Activated T-helper 1 cell treated with anti-CD3 and anti-CD28 coated beads, Interleukin-12 subunit alpha, Interleukin-12 subunit beta, Interleukin-2, Interleukin-4 antibody, amounts not matched to agents 30 ng/mL and 10 ng/mL and 1 ng/mL, durations not matched to agents 14 hours and 24 hours and 36 hours (primary cell): ENCODE measurements at regions of chr12 and their contacts with region 1.

Region 1: DNA sequence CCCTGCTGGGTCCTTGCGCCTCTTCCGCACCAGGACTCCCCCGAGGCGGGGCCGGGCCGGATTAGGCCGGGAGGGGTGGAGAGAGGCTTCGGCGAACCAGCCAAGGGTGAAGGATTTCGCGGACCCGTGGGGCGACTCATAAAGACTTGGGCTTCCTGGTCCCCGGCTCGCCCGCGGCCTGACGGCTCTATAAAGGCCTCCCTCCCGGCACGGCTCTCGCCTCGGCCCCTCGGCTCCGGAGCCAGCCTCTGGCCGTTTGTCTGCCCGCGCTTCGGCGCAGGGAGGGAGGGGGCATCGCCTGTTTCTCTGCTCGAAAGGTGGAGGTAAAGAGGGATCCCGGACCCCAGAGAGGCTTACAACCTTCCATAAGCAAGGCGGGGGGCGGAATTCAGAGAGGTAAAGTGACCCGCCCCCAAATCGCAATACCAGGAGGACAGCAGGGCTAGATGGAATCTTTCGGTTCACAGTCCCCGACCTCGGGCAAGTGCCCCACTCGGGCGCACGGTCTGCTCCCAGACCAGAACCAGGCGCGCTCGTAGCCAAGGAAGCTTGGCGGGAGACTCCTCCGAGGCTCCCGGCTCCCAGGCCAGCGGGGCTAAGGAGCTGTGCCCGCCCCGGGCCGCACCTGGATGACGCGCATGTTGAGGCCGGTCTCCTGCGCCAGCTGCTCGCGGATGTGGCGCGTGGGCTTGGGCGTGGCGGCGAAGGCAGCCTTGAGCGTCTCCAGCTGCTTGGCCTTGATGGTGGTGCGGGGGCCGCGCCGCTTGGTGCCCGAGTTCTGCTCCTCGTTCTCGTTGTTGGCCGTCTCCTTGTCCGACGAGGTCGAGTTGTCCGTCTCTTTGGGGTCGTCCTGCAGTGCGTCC is 3.9 kb downstream of the LHX5 start:
- DNase-seq: no peak
- H3K4me3 Mint-ChIP-seq: no peak overlapping the region
- H3K27ac Mint-ChIP-seq: no peak overlapping the region
- H3K4me1 Mint-ChIP-seq: peaks cover 6% of the 10 kb centered on the region
- H3K27me3 Mint-ChIP-seq: peaks cover 58% of the 10 kb centered on the region

Region 2: GRCh38 chr12:113358381-113359132 is 109.2 kb before region 1 on chr12 and contains the start of gene PLBD2:
- intact Hi-C with region 1: no loop called
- DNase-seq: peak; percentile 89
- H3K4me3 Mint-ChIP-seq: peak within 1 kb of the TSS; percentile 89
- H3K27ac Mint-ChIP-seq: peak within 1 kb of the TSS; percentile 69
- H3K4me1 Mint-ChIP-seq: peaks cover 13% of the 10 kb centered on the region
- H3K27me3 Mint-ChIP-seq: peaks cover 4% of the 10 kb centered on the region
- total RNA-seq, gene PLBD2: 15.3 and 16.3 TPM in 2 replicates

Region 3: GRCh38 chr12:114403011-114403689 is 935.4 kb after region 1 on chr12:
- intact Hi-C with region 1: loop called (anchors 5 kb)
- DNase-seq: no peak
- H3K4me3 Mint-ChIP-seq: no peak overlapping the region
- H3K27ac Mint-ChIP-seq: peak overlapping the region; percentile 63
- H3K4me1 Mint-ChIP-seq: peaks cover 3% of the 10 kb centered on the region
- H3K27me3 Mint-ChIP-seq: peaks cover 83% of the 10 kb centered on the region

Region 4: DNA sequence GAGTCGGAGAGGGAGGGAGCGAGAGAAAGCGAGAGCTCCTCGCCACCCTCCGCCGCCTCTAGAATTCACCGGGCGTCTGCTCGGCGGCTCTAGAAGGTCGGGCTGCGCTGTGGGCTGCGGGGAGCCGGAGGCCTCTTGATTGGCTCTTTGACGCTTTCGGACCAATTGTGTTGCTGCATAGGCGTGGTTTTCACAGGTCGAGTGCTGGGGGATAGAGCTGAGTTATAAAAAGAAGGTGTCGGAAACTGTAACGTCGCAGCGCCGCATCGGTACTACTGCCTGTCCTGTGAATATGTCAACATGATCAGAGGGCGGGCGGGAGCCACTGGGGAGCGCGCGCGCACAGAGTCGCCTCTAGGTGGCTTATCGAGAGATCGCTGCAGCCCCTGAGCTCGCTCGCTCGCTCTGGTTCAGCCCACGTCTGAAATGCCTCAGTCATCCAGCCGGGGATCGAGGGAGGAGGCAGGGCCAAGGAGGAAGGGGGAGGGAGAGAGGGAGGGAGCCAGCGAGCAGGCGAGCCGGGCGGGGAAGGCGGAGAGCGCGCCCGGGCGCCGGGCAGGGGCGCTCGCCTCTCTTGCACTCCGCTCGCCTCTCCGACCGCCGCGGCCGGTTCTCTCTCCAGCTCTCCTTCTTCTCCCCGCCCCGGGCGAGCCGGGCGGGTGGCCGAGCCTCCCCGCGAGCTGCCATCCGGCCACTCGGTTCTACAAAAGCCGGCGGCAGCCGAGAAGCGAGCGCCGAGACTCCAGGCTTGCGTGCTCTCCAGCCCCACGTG is 1216.6 kb after region 1 on chr12 and contains the start of gene TBX3:
- intact Hi-C with region 1: loop called (anchors 5 kb)
- DNase-seq: peak; percentile 1
- H3K4me3 Mint-ChIP-seq: peak within 1 kb of the TSS; percentile 33
- H3K27ac Mint-ChIP-seq: peak within 1 kb of the TSS; percentile 81
- H3K4me1 Mint-ChIP-seq: peaks cover 13% of the 10 kb centered on the region
- H3K27me3 Mint-ChIP-seq: peaks cover 84% of the 10 kb centered on the region
- total RNA-seq, gene TBX3: not detected in 2 replicates